Transverse colon (tissue), 4 donors: ENCODE measurements at regions of chr6 and their contacts with region 1.

Region 1: GRCh38 chr6:29953001-29953441 is 10.7 kb downstream of the HLA-A start:
- DNase-seq: no peak
- H3K4me3 ChIP-seq: no peak overlapping the region
- H3K27ac ChIP-seq: no peak overlapping the region
- H3K4me1 ChIP-seq: no peaks in the 10 kb centered on the region
- H3K27me3 ChIP-seq: no peaks in the 10 kb centered on the region
- CTCF ChIP-seq: no peak
- EP300 ChIP-seq: no peak
- POLR2A ChIP-seq: no peak

Region 2: DNA sequence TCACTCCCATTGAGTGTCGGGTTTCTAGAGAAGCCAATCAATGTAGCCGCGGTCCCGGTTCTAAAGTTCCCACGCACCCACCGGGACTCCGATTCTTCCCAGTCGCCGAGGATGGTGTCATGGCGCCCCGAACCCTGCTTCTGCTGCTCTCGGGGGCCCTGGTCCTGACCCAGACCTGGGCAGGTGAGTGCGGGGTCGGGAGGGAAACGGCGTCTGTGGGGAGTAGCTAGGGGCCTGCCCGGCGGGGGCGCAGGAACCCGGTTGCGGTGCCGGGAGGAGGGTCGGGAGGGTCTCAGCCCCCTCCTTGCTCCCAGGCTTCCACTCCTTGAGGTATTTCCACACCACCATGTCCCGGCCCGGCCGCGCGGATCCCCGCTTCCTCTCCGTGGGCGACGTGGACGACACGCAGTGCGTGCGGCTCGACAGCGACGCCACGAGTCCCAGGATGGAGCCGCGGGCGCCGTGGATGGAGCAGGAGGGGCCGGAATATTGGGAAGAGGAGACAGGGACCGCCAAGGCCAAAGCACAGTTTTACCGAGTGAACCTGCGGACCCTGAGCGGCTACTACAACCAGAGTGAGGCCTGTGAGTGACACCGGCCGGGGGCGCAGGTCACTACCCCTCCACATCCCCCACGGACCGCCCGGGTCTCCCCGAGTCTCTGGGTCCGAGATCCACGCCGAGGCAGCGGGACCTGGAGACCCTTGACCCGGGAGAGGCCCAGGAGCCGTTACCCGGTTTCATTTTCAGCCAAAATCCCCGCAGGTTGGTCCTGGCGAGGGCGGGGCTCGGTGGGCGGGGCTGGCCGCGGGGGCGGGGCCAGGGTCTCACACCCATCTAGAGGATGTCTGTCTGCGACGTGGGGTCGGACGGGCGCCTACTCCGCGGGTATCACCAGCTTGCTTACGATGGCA is 160.6 kb before region 1 on chr6:
- in situ Hi-C with region 1: loop called in 2 of 4 experiments (anchors 5 to 10 kb)
- intact Hi-C with region 1: loop called (anchors 5 kb)
- DNase-seq: peak; percentile 58
- H3K4me3 ChIP-seq: peak overlapping the region; percentile 30 to 58 (median 46)
- H3K27ac ChIP-seq: peak overlapping the region in 2 of 4 donors; percentile 12 to 39
- H3K4me1 ChIP-seq: peaks cover 0 to 13% (median 9%) of the 10 kb centered on the region in 4 donors
- H3K27me3 ChIP-seq: peaks cover 60% of the 10 kb centered on the region
- CTCF ChIP-seq: peak; percentile 30 to 49 (median 45)
- EP300 ChIP-seq: no peak
- POLR2A ChIP-seq: no peak

Region 3: GRCh38 chr6:29847871-29848630 is 105.0 kb before region 1 on chr6:
- in situ Hi-C with region 1: no loop called
- intact Hi-C with region 1: no loop called
- DNase-seq: peak; percentile 87
- H3K4me3 ChIP-seq: no peak overlapping the region
- H3K27ac ChIP-seq: no peak overlapping the region
- H3K4me1 ChIP-seq: peaks cover 0 to 8% (median 0%) of the 10 kb centered on the region in 4 donors
- H3K27me3 ChIP-seq: peaks cover 63% of the 10 kb centered on the region
- CTCF ChIP-seq: peak; percentile 88 to 95 (median 94)
- EP300 ChIP-seq: no peak
- POLR2A ChIP-seq: no peak

Region 4: GRCh38 chr6:30047220-30047619 is 94.2 kb after region 1 on chr6:
- in situ Hi-C with region 1: no loop called
- intact Hi-C with region 1: no loop called
- DNase-seq: no peak
- H3K4me3 ChIP-seq: no peak overlapping the region
- H3K27ac ChIP-seq: no peak overlapping the region
- H3K4me1 ChIP-seq: no peaks in the 10 kb centered on the region
- H3K27me3 ChIP-seq: no peaks in the 10 kb centered on the region
- CTCF ChIP-seq: no peak
- EP300 ChIP-seq: no peak
- POLR2A ChIP-seq: no peak